Naive thymus-derived CD4-positive, alpha-beta T cell (primary cell): ENCODE measurements at regions of chr3 and their contacts with region 1.

Region 1: DNA sequence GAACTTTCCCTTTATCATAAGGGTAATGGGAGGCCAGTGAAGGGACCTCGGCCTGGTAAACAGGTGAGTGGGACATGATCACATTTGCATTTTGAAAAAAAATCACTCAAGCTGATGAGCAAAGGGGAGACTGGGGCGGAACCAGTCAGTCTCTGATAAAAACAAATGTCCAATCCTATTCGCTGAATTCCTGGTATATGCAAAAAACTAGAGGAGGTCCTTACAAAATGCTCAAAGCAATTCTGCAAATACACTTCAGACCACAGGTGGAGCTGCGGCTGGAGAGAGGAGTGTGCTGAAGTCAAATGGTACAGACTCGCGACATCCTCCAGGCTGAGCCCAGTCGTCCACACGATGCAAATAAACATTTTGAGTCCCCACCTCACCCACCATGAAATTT is 166.7 kb downstream of the FOXP1 start:
- DNase-seq: peak in 7 of 9 donors; percentile 56 to 72 (median 65)
- ATAC-seq: peak; percentile 69
- H3K4me3 ChIP-seq: peak overlapping the region; percentile 20
- H3K4me3 Mint-ChIP-seq: peak overlapping the region in 9 of 10 donors; percentile 40 to 82 (median 69)
- H3K27ac ChIP-seq: peak overlapping the region; percentile 67
- H3K27ac Mint-ChIP-seq: peak overlapping the region in 8 of 9 donors; percentile 87 to 99 (median 94)
- H3K4me1 ChIP-seq: peaks cover 54 to 87% of the 10 kb centered on the region in 2 donors
- H3K4me1 Mint-ChIP-seq: peaks cover 41 to 99% (median 96%) of the 10 kb centered on the region in 7 donors
- H3K27me3 ChIP-seq: no peaks in the 10 kb centered on the region
- H3K27me3 Mint-ChIP-seq: peaks cover 0 to 44% (median 0%) of the 10 kb centered on the region in 5 donors

Region 2: DNA sequence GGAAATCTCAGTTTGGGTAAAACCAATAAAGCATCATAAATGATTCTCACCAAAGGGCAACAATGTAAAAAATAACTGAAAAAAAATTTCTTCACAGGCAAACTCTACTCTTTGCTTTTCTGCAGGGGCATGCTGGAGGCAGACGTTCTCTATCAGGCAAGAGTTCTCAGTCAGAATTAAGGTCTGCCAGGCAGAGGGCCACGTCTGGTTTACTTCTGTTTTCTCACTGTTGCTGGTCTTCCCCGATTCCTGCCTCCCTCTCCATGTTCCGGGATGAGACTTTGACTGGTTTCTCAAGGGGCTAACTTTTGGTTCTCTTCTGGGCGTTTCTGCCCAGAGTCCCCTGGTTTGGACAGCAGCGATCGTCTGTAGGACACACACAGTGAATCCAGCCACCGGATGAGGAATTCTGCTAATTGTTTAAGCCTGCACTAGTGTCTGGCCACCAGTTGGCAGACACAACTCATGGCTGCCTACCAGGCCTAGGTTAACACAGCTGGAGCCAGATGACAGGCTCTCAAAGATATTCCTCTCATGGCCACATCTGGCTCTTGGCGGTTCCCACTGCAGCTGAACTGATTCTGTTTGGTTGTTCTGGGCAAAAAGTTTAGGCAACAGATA is 106.4 kb before region 1 on chr3:
- CTCF ChIA-PET with region 1: no interaction called
- POLR2A ChIA-PET with region 1: no interaction called
- intact Hi-C with region 1: no loop called
- DNase-seq: no peak
- ATAC-seq: no peak
- H3K4me3 ChIP-seq: no peak overlapping the region
- H3K4me3 Mint-ChIP-seq: peak overlapping the region in 6 of 10 donors; percentile 17 to 84 (median 40)
- H3K27ac ChIP-seq: peak overlapping the region; percentile 90
- H3K27ac Mint-ChIP-seq: peak overlapping the region in 7 of 9 donors; percentile 82 to 98 (median 97)
- H3K4me1 ChIP-seq: peaks cover 8 to 58% of the 10 kb centered on the region in 2 donors
- H3K4me1 Mint-ChIP-seq: peaks cover 30 to 93% (median 78%) of the 10 kb centered on the region in 7 donors
- H3K27me3 ChIP-seq: no peaks in the 10 kb centered on the region
- H3K27me3 Mint-ChIP-seq: peaks cover 0 to 30% (median 0%) of the 10 kb centered on the region in 5 donors

Region 3: DNA sequence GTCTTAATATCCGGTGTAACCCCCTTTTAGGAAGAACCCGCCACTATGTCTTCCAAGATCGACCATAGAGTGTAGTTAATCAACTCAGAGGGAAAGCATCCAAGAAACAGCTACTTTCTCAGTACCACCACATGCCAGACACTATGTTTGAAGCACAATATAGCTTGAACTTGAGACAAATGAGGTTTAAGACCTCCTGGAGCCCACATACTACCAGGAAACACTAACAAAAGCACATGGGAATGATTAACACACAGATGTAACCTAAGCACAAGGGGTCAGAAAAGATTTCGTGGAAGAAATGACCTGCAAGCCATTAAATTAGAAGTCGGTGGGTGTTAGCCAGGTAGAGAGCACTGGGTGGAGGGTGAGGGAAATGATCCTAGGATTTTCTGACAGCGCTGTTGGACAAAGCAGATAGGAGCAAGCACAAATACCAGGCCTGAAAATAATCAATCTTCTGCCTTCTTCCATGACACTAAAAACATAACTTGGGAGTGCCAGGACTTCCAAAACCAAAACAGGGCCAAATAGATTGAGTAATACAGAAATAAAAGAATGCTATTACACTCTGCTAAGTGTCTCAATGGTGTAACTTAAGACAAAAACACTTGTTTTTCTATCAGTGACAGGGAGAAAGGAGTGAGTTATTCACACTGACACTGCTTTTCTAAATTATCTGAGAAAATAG is 47.0 kb before region 1 on chr3:
- CTCF ChIA-PET with region 1: no interaction called
- POLR2A ChIA-PET with region 1: interaction called, 3 read pairs
- intact Hi-C with region 1: loop called in 1 of 2 experiments (anchors 2 kb)
- DNase-seq: no peak
- ATAC-seq: no peak
- H3K4me3 ChIP-seq: no peak overlapping the region
- H3K4me3 Mint-ChIP-seq: peak overlapping the region in 2 of 10 donors; percentile 12 to 73
- H3K27ac ChIP-seq: peak overlapping the region; percentile 88
- H3K27ac Mint-ChIP-seq: peak overlapping the region in 8 of 9 donors; percentile 88 to 100 (median 96)
- H3K4me1 ChIP-seq: peaks cover 19 to 78% of the 10 kb centered on the region in 2 donors
- H3K4me1 Mint-ChIP-seq: peaks cover 10 to 94% (median 89%) of the 10 kb centered on the region in 7 donors
- H3K27me3 ChIP-seq: no peaks in the 10 kb centered on the region
- H3K27me3 Mint-ChIP-seq: peaks cover 0 to 39% (median 0%) of the 10 kb centered on the region in 5 donors

Region 4: GRCh38 chr3:71389911-71390573 is 26.8 kb before region 1 on chr3:
- CTCF ChIA-PET with region 1: no interaction called
- POLR2A ChIA-PET with region 1: interaction called, 4 read pairs
- intact Hi-C with region 1: loop called in 1 of 2 experiments (anchors 2 kb)
- DNase-seq: peak in 8 of 9 donors; percentile 25 to 67 (median 49)
- ATAC-seq: peak; percentile 55
- H3K4me3 ChIP-seq: peak overlapping the region; percentile 51
- H3K4me3 Mint-ChIP-seq: peak overlapping the region; percentile 68 to 88 (median 83)
- H3K27ac ChIP-seq: peak overlapping the region; percentile 81
- H3K27ac Mint-ChIP-seq: peak overlapping the region; percentile 75 to 99 (median 90)
- H3K4me1 ChIP-seq: peaks cover 29 to 74% of the 10 kb centered on the region in 2 donors
- H3K4me1 Mint-ChIP-seq: peaks cover 27 to 93% (median 83%) of the 10 kb centered on the region in 7 donors
- H3K27me3 ChIP-seq: no peaks in the 10 kb centered on the region
- H3K27me3 Mint-ChIP-seq: peaks cover 0 to 22% (median 0%) of the 10 kb centered on the region in 5 donors

Region 5: DNA sequence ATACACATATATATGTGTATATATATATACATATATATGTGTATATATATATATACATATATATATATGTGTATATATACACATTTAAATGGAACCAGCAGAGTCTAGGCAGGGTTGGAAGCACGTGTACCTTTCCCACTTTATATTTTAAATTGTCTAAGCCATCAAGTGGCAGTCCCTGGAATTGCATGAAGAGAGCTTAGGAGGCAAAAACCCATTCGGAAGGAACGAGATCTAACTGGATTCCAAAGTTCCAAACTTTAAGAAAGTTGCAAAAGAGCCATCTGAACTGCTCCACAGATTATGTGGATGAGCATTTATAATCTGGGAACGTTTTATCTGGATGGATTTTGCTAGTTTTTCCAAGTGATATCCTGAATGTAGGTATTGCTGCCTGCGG is 19.8 kb before region 1 on chr3:
- CTCF ChIA-PET with region 1: interaction called, 8 read pairs
- POLR2A ChIA-PET with region 1: interaction called, 3 read pairs
- intact Hi-C with region 1: loop called in 1 of 2 experiments (anchors 2 kb)
- DNase-seq: no peak
- ATAC-seq: no peak
- H3K4me3 ChIP-seq: peak overlapping the region; percentile 3
- H3K4me3 Mint-ChIP-seq: peak overlapping the region in 9 of 10 donors; percentile 54 to 80 (median 73)
- H3K27ac ChIP-seq: peak overlapping the region; percentile 86
- H3K27ac Mint-ChIP-seq: peak overlapping the region in 8 of 9 donors; percentile 81 to 98 (median 92)
- H3K4me1 ChIP-seq: peaks cover 39 to 79% of the 10 kb centered on the region in 2 donors
- H3K4me1 Mint-ChIP-seq: peaks cover 23 to 95% (median 84%) of the 10 kb centered on the region in 7 donors
- H3K27me3 ChIP-seq: no peaks in the 10 kb centered on the region
- H3K27me3 Mint-ChIP-seq: peaks cover 0 to 52% (median 0%) of the 10 kb centered on the region in 5 donors

Region 6: GRCh38 chr3:71428841-71429596 is 12.1 kb after region 1 on chr3:
- CTCF ChIA-PET with region 1: interaction called, 4 read pairs
- POLR2A ChIA-PET with region 1: interaction called, 23 read pairs
- intact Hi-C with region 1: loop called in 1 of 2 experiments (anchors 1 kb)
- DNase-seq: peak in 1 of 9 donors; percentile 43
- ATAC-seq: peak; percentile 26
- H3K4me3 ChIP-seq: peak overlapping the region; percentile 23
- H3K4me3 Mint-ChIP-seq: peak overlapping the region in 9 of 10 donors; percentile 65 to 81 (median 77)
- H3K27ac ChIP-seq: peak overlapping the region; percentile 68
- H3K27ac Mint-ChIP-seq: peak overlapping the region; percentile 7 to 99 (median 95)
- H3K4me1 ChIP-seq: peaks cover 25 to 88% of the 10 kb centered on the region in 2 donors
- H3K4me1 Mint-ChIP-seq: peaks cover 55 to 100% (median 97%) of the 10 kb centered on the region in 7 donors
- H3K27me3 ChIP-seq: no peaks in the 10 kb centered on the region
- H3K27me3 Mint-ChIP-seq: peaks cover 0 to 31% (median 0%) of the 10 kb centered on the region in 5 donors

Region 7: GRCh38 chr3:71487418-71487817 is 70.5 kb after region 1 on chr3:
- CTCF ChIA-PET with region 1: interaction called, 3 read pairs
- POLR2A ChIA-PET with region 1: interaction called, 5 read pairs
- intact Hi-C with region 1: loop called in 1 of 2 experiments (anchors 1 kb)
- DNase-seq: peak in 2 of 9 donors; percentile 23 to 32
- ATAC-seq: no peak
- H3K4me3 ChIP-seq: peak overlapping the region; percentile 19
- H3K4me3 Mint-ChIP-seq: peak overlapping the region; percentile 70 to 98 (median 88)
- H3K27ac ChIP-seq: peak overlapping the region; percentile 89
- H3K27ac Mint-ChIP-seq: peak overlapping the region; percentile 79 to 100 (median 98)
- H3K4me1 ChIP-seq: peaks cover 66 to 93% of the 10 kb centered on the region in 2 donors
- H3K4me1 Mint-ChIP-seq: peaks cover 44 to 94% (median 88%) of the 10 kb centered on the region in 7 donors
- H3K27me3 ChIP-seq: no peaks in the 10 kb centered on the region
- H3K27me3 Mint-ChIP-seq: peaks cover 0 to 3% (median 0%) of the 10 kb centered on the region in 5 donors